Activated T-helper 2 cell treated with anti-CD3 and anti-CD28 coated beads, Interferon-gamma antibody, Interleukin-2, Interleukin-4, amounts not matched to agents 10 μg/mL and 5 μg/mL and 100 μg/mL, durations not matched to agents 14 hours and 24 hours and 36 hours (primary cell): ENCODE measurements at regions of chr17 and their contacts with region 1.

Region 1: DNA sequence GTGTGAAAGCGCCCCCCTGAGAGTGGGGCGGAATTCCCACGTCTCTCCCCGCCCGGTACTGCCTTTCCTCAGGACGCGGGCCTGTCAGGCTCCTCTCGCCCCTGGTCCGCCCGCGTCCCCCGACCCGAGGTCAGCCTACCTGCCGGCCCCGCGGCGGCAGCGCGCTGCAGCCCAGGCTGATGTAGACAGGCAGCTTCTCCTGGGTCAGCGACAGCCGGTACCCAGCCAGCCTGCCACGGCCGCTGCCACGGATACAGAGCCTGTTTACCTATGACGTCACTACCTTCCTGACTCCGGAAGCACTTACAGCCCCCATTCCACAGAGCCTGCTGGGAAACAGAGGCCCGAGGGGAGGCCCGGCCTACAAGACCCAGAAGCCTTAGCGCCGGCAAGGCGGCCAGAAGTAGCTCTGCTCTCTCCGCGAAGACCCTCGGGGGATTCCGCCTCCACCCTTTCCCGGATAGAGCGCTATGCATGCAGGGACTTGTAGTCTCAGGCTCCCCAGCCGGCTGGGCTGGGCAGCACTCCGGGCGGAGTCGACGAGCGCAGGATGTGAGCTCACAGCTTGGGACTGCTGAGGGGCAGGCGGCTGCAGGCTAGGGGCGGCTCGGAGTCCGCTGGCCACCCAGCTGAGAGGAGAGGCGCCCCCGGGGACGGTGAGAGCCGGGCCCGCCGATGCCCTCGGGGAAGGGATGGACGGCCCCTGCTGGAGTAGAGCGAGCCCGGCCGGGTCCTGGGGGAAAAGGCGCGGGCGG is at the starts of genes IFT20 and TNFAIP1:
- DNase-seq: peak; percentile 98
- H3K4me3 Mint-ChIP-seq: peak within 1 kb of the TSS; percentile 97
- H3K27ac Mint-ChIP-seq: peak within 1 kb of the TSS; percentile 89
- H3K4me1 Mint-ChIP-seq: peaks cover 29% of the 10 kb centered on the region
- H3K27me3 Mint-ChIP-seq: no peaks in the 10 kb centered on the region
- total RNA-seq, gene IFT20: 21.1 and 24.1 TPM in 2 replicates
- total RNA-seq, gene TNFAIP1: 31.3 and 32.3 TPM in 2 replicates

Region 2: GRCh38 chr17:28318759-28319660 is 16.4 kb before region 1 on chr17 and contains the start of gene TMEM97:
- intact Hi-C with region 1: loop called (anchors 2 kb)
- DNase-seq: peak; percentile 96
- H3K4me3 Mint-ChIP-seq: peak within 1 kb of the TSS; percentile 90
- H3K27ac Mint-ChIP-seq: peak within 1 kb of the TSS; percentile 88
- H3K4me1 Mint-ChIP-seq: peaks cover 39% of the 10 kb centered on the region
- H3K27me3 Mint-ChIP-seq: no peaks in the 10 kb centered on the region
- total RNA-seq, gene TMEM97: 60.5 and 61.8 TPM in 2 replicates

Region 3: DNA sequence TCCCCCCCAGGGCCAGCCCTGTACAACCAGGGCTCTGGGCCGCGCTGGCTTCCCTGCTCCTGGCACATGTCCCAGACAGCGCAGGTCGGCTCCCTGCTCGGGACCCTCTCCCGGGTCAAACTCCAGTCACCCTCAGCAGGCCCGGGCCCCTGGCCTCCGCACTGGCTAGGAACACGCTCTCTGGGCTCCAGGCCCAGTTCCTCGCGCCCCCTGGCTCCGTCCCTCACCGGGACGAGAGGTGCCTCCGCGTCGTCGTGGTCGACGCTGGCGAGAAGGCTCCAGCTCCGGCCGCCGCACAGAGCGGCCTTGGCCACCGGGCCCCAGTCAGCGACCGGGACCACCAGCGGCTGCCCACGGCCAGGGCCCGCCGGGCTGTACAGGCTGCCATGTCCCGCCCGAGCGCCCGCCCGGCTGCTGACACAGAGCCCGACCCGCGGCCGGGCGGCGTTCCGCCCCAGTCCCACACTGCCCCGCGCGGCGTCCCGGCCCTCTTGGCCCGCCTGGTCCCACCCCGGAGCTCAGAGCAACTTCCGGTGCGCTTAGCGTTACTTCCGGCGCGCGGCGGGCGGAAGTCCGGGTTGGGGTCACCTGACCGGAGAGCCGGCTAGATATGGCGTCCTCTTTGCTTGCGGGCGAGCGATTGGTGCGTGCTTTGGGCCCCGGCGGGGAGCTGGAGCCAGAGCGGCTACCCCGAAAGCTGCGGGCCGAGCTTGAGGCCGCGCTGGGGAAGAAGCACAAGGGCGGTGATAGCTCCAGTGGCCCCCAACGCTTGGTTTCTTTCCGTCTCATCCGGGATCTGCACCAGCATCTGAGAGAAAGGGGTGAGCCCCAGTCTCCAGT is 21.9 kb after region 1 on chr17 and contains the start of gene POLDIP2:
- intact Hi-C with region 1: loop called (anchors 1 kb)
- DNase-seq: peak; percentile 96
- H3K4me3 Mint-ChIP-seq: peak within 1 kb of the TSS; percentile 97
- H3K27ac Mint-ChIP-seq: peak within 1 kb of the TSS; percentile 95
- H3K4me1 Mint-ChIP-seq: peaks cover 22% of the 10 kb centered on the region
- H3K27me3 Mint-ChIP-seq: no peaks in the 10 kb centered on the region
- total RNA-seq, gene POLDIP2: 89.7 and 93.2 TPM in 2 replicates

Region 4: GRCh38 chr17:28371245-28372202 is 36.1 kb after region 1 on chr17 and contains the start of gene SARM1:
- intact Hi-C with region 1: loop called (anchors 1 kb)
- DNase-seq: peak; percentile 84
- H3K4me3 Mint-ChIP-seq: peak within 1 kb of the TSS; percentile 95
- H3K27ac Mint-ChIP-seq: peak within 1 kb of the TSS; percentile 93
- H3K4me1 Mint-ChIP-seq: peaks cover 13% of the 10 kb centered on the region
- H3K27me3 Mint-ChIP-seq: no peaks in the 10 kb centered on the region
- total RNA-seq, gene SARM1: 35.0 and 35.9 TPM in 2 replicates